Transverse colon (tissue), 4 donors: ENCODE measurements at regions of chr5 and their contacts with region 1.

Region 1: GRCh38 chr5:124748687-124749594 is 2.5 kb upstream of the ZNF608 start:
- DNase-seq: peak; percentile 87
- H3K4me3 ChIP-seq: peak overlapping the region; percentile 32 to 73 (median 60)
- H3K27ac ChIP-seq: peak overlapping the region; percentile 94 to 98 (median 96)
- H3K4me1 ChIP-seq: peaks cover 3 to 30% (median 22%) of the 10 kb centered on the region in 4 donors
- H3K27me3 ChIP-seq: no peaks in the 10 kb centered on the region
- CTCF ChIP-seq: peak in 1 of 5 experiments; percentile 18
- EP300 ChIP-seq: no peak
- POLR2A ChIP-seq: peak; percentile 92

Region 2: DNA sequence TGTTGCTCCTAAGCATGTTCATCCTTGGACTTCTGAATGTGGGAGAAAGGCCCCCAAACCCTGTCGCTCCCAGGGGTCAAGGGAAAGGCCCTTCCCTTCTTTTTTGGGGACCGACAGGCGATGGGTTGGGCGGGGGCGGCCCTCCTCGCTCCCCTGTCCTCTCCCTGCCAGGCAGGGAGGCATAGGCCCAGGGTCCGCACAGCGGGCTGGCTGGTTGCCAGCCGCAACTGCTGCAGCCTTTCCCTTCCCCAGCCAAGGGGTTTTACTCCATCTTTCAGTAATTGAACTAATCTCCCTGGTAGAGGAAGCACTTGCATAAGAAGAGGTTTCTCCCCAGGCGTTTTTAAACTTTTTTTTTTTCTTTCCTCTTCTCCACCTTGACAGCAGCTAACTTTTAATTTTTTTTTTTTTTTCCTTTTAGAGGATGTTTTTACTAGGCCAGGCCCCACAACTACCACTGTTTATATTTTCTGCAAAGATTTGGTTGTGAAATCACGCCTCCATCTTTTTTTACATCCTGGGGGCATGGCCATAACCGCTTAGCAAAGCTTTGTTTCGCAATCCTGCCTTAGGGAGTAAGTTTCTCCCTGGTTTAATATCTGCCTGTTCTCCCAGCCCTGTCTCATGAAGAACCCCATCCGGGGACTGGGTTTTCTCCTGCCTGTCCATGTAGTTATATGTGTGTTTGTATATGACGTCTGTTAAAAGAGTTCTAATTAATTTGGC is 214.5 kb after region 1 on chr5:
- in situ Hi-C with region 1: no loop called
- intact Hi-C with region 1: no loop called
- DNase-seq: no peak
- H3K4me3 ChIP-seq: no peak overlapping the region
- H3K27ac ChIP-seq: no peak overlapping the region
- H3K4me1 ChIP-seq: peaks cover 0 to 8% (median 0%) of the 10 kb centered on the region in 4 donors
- H3K27me3 ChIP-seq: no peaks in the 10 kb centered on the region
- CTCF ChIP-seq: no peak
- EP300 ChIP-seq: no peak
- POLR2A ChIP-seq: no peak

Region 3: DNA sequence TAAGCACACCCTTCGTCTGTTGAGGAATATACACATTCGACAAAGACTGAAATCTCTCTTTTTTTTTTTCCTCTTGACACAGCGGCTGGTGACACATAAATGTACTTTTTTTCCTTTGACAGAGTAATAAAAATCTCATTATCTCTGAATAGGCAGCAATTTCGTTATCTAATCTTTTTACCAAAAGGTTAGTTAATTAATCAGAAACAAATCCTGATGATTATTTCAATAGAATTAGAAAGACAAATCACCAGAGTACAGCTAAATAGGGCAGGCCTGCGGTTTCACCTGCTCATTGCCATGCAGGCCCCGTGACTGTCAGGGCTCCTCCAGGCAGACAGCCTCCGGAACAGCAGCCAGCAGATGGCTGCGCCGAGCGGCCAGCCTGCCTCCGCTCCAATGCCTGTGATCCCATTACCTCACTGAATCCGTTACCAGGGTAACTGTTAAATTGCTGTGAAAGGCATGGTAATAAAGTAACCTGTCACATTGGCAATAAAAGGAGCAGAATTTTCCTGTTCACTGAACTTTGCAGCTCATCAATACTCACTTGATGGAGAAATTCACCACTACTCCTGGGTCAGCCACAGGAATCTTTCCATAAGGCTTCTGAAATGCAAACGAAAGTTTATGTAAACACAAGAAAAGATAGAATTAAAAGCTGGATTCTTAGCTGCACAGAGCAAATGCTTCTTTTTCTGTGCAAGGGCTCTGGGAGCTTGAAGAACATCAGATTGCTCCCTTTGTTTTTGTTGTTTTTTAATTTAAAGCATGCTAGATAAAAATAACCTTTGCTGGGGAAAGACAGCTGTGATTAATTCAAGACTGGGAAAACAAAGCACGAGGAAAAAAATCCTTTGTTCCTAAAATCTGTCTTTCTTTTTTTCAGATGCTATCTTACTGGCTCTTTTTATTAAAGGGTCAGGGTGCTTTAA is 663.9 kb after region 1 on chr5:
- in situ Hi-C with region 1: no loop called
- intact Hi-C with region 1: loop called (anchors 10 kb)
- DNase-seq: peak; percentile 79
- H3K4me3 ChIP-seq: peak overlapping the region in 1 of 4 donors; percentile 2
- H3K27ac ChIP-seq: peak overlapping the region; percentile 70 to 82 (median 74)
- H3K4me1 ChIP-seq: peaks cover 32 to 60% (median 53%) of the 10 kb centered on the region in 4 donors
- H3K27me3 ChIP-seq: no peaks in the 10 kb centered on the region
- CTCF ChIP-seq: peak; percentile 34 to 54 (median 37)
- EP300 ChIP-seq: no peak
- POLR2A ChIP-seq: no peak